Transverse colon (tissue), 4 donors: ENCODE measurements at regions of chr10 and their contacts with region 1.

Region 1: GRCh38 chr10:72126184-72126871 is 38.0 kb upstream of the SPOCK2 start:
- DNase-seq: no peak
- H3K4me3 ChIP-seq: no peak overlapping the region
- H3K27ac ChIP-seq: no peak overlapping the region
- H3K4me1 ChIP-seq: peaks cover 0 to 22% (median 0%) of the 10 kb centered on the region in 4 donors
- H3K27me3 ChIP-seq: no peaks in the 10 kb centered on the region
- CTCF ChIP-seq: peak in 3 of 5 experiments; percentile 17 to 20 (median 18)
- EP300 ChIP-seq: no peak
- POLR2A ChIP-seq: no peak

Region 2: DNA sequence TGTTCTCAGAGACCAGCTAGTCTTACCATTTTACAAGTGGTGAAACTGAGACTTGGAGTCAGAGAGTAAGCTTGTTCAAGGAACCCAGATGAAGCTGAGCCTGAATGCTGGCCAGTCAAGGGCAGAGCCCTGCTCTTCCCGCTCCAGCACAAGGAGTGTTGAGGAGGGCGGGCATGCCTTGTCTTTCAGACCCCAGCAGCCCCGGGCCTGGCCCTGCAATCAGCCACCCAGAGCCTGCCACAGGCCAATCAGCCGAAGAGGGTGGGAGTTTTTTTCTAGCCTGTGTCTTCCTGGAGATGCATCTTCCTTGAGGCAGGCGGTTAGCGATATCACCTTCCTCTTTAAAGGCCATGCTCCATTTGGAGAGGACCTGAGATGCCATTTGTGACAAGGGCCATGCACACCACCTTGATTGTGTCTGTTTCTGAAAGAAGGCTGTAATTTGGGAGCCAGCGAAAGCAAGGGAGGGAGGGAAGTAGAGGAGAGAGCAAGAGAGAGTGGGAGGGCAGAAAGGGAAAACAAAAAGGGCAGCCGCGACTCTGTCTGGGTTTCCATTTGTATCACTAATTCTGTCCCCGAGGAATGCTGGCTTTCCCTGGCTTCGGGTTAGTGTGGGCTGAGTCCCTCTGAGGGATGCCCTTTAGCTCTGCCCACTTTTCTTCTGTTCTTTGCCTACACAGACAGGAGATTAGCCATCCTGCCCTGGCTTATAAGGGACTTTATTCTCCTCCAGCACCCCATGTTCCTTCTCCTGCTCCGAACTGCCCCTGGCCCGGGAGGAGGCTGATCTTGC is 721.6 kb before region 1 on chr10:
- in situ Hi-C with region 1: no loop called
- intact Hi-C with region 1: loop called (anchors 5 kb)
- DNase-seq: no peak
- H3K4me3 ChIP-seq: no peak overlapping the region
- H3K27ac ChIP-seq: no peak overlapping the region
- H3K4me1 ChIP-seq: no peaks in the 10 kb centered on the region
- H3K27me3 ChIP-seq: peaks cover 29% of the 10 kb centered on the region
- CTCF ChIP-seq: no peak
- EP300 ChIP-seq: no peak
- POLR2A ChIP-seq: no peak

Region 3: DNA sequence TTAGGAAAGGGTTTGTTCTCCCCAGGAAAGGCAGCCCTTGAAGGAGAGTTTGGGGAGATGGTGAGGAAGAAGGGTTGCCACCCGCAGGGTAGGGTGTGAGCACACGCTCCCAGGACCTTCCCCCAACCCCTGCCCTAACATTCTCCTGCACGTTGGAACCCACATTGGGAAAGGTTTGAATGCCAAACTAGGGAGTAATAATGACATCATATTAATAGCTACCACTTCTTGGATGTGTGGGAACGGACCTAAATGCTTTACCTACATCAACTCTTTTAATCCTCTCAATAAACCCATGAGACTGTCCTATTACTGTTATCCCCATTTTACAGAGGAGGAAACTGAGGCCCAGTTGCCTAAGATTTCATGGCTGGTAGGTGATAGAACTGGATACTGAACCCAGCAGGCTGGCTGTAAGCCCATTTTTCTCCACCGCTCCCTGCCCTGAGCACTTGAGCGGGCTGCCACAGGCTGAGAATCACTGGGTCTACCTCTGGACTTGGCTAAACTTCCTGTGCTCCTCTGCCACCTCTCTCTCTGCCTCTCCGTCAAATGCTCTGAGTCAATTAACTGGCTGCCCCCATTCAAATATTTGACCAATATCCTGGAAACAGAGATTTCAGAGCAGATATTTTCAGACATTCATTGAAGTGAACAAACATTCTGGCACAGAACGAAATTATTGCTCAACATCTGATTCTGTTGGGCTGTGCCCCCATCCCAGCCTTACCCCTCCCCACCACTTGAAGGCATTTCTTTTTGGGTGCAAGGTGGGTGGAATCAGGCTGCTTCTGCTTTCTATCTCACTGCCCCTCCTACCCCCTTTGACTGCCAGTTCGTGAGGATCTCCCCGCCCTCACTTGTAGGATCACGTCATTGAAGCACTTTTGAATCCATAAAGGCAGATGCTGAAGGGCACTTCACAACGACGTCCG is 536.4 kb before region 1 on chr10:
- in situ Hi-C with region 1: no loop called
- intact Hi-C with region 1: no loop called
- DNase-seq: no peak
- H3K4me3 ChIP-seq: no peak overlapping the region
- H3K27ac ChIP-seq: no peak overlapping the region
- H3K4me1 ChIP-seq: no peaks in the 10 kb centered on the region
- H3K27me3 ChIP-seq: peaks cover 17% of the 10 kb centered on the region
- CTCF ChIP-seq: no peak
- EP300 ChIP-seq: no peak
- POLR2A ChIP-seq: no peak

Region 4: GRCh38 chr10:71860243-71861029 is 265.9 kb before region 1 on chr10:
- in situ Hi-C with region 1: no loop called
- intact Hi-C with region 1: no loop called
- DNase-seq: peak; percentile 83
- H3K4me3 ChIP-seq: no peak overlapping the region
- H3K27ac ChIP-seq: peak overlapping the region; percentile 83 to 89 (median 85)
- H3K4me1 ChIP-seq: peaks cover 5 to 16% (median 10%) of the 10 kb centered on the region in 4 donors
- H3K27me3 ChIP-seq: no peaks in the 10 kb centered on the region
- CTCF ChIP-seq: no peak
- EP300 ChIP-seq: no peak
- POLR2A ChIP-seq: no peak

Region 5: GRCh38 chr10:72223743-72224101 is 97.4 kb after region 1 on chr10:
- in situ Hi-C with region 1: no loop called
- intact Hi-C with region 1: no loop called
- DNase-seq: no peak
- H3K4me3 ChIP-seq: no peak overlapping the region
- H3K27ac ChIP-seq: peak overlapping the region; percentile 55 to 77 (median 68)
- H3K4me1 ChIP-seq: peaks cover 13 to 43% (median 18%) of the 10 kb centered on the region in 4 donors
- H3K27me3 ChIP-seq: no peaks in the 10 kb centered on the region
- CTCF ChIP-seq: no peak
- EP300 ChIP-seq: no peak
- POLR2A ChIP-seq: no peak

Region 6: DNA sequence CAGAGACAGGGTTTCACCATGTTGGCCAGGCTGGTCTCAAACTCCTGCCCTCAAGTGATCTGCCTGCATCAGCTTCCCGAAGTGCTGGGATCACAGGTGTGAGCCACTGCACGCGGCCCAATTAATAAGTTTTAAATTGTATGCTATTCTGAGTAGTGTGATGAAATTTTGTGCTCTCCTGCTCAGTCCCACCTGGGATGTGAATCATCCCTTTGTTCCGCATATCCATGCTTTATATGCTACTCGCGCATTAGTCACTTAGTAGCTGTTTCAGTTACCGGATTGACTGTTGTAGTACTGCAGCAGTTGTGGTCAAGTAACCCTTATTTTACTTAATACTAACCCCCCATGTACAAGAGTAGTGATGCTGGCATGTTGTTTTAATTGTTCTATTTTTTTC is 719.9 kb after region 1 on chr10:
- in situ Hi-C with region 1: no loop called
- intact Hi-C with region 1: no loop called
- DNase-seq: no peak
- H3K4me3 ChIP-seq: no peak overlapping the region
- H3K27ac ChIP-seq: no peak overlapping the region
- H3K4me1 ChIP-seq: no peaks in the 10 kb centered on the region
- H3K27me3 ChIP-seq: no peaks in the 10 kb centered on the region
- CTCF ChIP-seq: no peak
- EP300 ChIP-seq: no peak
- POLR2A ChIP-seq: no peak